SK-N-SH (cell line): ENCODE measurements at regions of chr3 and their contacts with region 1.

Region 1: DNA sequence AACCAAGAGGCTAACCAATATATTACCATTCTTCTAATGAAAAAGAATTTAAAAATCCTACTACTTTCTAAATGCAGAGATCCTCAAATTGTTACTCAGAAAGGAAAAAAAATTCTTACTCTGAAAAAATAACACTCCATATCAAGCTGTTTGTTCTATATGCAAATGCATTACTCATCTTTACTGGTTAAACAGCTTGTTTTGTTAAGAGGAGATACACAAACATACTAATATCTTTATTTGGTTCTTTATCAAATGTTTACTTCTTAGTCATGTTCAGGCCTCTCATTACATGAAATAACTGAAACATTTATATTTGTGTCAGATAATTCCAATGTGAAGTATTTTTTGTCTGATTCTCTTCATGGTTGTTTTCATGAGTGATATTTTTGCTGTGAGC is 146.8 kb downstream of the PCCB start:
- DNase-seq: no peak
- H3K4me3 ChIP-seq: no peak overlapping the region
- H3K27ac ChIP-seq: no peak overlapping the region
- H3K4me1 ChIP-seq: no peaks in the 10 kb centered on the region
- H3K27me3 ChIP-seq: no peaks in the 10 kb centered on the region
- CTCF ChIP-seq: no peak
- EP300 ChIP-seq: no peak
- RAD21 ChIP-seq: no peak

Region 2: GRCh38 chr3:136414476-136414875 is 17.6 kb after region 1 on chr3:
- CTCF ChIA-PET with region 1: interaction called, 12 read pairs
- POLR2A ChIA-PET with region 1: no interaction called
- DNase-seq: no peak
- H3K4me3 ChIP-seq: no peak overlapping the region
- H3K27ac ChIP-seq: no peak overlapping the region
- H3K4me1 ChIP-seq: no peaks in the 10 kb centered on the region
- H3K27me3 ChIP-seq: no peaks in the 10 kb centered on the region
- CTCF ChIP-seq: no peak
- EP300 ChIP-seq: no peak
- RAD21 ChIP-seq: no peak